ENCODE measurements at regions of chr9 and their contacts with region 1.

Region 1: DNA sequence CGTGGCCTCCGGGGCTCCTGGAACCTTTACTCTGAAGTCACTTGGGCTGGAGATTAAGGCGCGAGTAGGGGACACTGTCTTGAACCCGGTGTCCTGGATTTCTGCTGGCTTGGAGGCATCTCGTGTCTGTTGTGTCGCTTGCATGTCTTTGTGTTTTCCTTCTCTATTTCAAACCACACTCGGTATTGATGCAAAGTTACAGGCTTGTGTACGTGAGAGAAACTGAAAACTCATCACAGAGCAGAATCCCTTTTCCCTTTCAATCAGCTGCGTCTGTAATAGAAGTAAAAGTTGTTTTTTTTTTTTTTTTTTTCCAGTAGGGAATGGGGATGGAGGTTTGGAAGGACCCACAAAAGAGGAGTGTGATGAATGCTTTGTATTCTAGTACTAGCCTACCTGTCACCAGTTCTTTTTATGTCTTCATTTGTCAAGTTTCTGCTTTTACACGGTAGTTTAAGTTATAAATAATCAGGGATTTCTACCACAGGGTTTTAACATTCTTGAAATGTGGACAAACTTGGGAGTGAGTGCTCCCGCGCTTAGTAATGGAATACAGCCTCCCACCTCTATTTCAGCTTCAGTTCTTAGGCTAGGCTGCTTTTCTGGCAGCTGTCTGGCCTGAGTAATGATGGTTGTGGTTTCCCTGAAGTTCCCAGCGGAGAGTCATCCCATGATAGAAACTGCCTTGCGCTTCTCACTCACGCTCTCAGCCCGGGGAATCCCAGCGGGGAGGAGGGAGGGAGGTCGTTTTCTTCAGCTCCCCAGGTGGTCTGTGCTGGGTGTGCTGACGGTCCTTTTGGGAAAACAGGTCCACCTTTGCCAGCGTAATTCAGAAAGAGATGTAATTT is 763 bp downstream of the TJP2 start:
- DNase-seq: peak; percentile 48
- ATAC-seq: peak; percentile 40
- H3K4me3 ChIP-seq: peak overlapping the region; percentile 66 to 73 (median 67)
- H3K27ac ChIP-seq: peak overlapping the region; percentile 50
- H3K4me1 ChIP-seq: peaks cover 91% of the 10 kb centered on the region
- H3K27me3 ChIP-seq: no peaks in the 10 kb centered on the region
- CTCF ChIP-seq: no peak
- EP300 ChIP-seq: no peak
- POLR2A ChIP-seq: no peak; a peak in 2 of 4 replicates
- RAD21 ChIP-seq: no peak

Region 2: GRCh38 chr9:69186841-69187611 is 12.2 kb after region 1 on chr9:
- CTCF ChIA-PET with region 1: no interaction called
- POLR2A ChIA-PET with region 1: interaction called, 97 read pairs
- in situ Hi-C with region 1: no loop called
- intact Hi-C with region 1: loop called (anchors 1 kb)
- DNase-seq: no peak
- ATAC-seq: no peak
- H3K4me3 ChIP-seq: no peak overlapping the region; a peak in 1 of 6 replicates
- H3K27ac ChIP-seq: peak overlapping the region; percentile 82
- H3K4me1 ChIP-seq: peaks cover 99% of the 10 kb centered on the region
- H3K27me3 ChIP-seq: no peaks in the 10 kb centered on the region
- CTCF ChIP-seq: no peak
- EP300 ChIP-seq: no peak
- POLR2A ChIP-seq: no peak
- RAD21 ChIP-seq: no peak